ENCODE measurements at regions of chr3 and their contacts with region 1.

Region 1: GRCh38 chr3:125003369-125003853 is 52.4 kb downstream of the HEG1 start:
- DNase-seq: no peak
- H3K4me3 ChIP-seq: no peak overlapping the region
- H3K27ac ChIP-seq: no peak overlapping the region
- H3K4me1 ChIP-seq: no peaks in the 10 kb centered on the region
- H3K27me3 ChIP-seq: no peaks in the 10 kb centered on the region

Region 2: DNA sequence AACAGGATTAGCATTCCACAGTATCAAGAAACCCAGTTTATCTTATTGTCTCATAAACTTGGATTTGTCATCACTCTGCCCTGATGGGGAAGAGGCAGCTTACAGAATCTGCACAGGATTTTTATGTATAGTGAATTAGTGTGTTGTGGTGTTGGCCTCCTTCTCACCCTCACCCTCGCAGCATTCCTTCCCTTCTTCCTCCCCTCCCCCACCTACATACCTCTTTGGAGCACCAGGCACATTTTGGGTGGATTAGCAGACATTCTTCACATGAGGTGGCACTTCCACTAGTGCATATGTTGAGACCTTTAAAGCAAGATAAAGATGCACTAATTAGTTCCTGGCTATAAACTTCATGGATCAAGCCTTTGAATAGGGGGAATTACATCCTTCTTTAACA is 130.2 kb before region 1 on chr3:
- CTCF ChIA-PET with region 1: no interaction called
- POLR2A ChIA-PET with region 1: no interaction called
- DNase-seq: no peak
- H3K4me3 ChIP-seq: no peak overlapping the region
- H3K27ac ChIP-seq: no peak overlapping the region
- H3K4me1 ChIP-seq: peaks cover 7 to 20% (median 11%) of the 10 kb centered on the region in 4 experiments
- H3K27me3 ChIP-seq: no peaks in the 10 kb centered on the region

Region 3: GRCh38 chr3:125129512-125129962 is 126.1 kb after region 1 on chr3:
- CTCF ChIA-PET with region 1: no interaction called
- POLR2A ChIA-PET with region 1: no interaction called
- DNase-seq: no peak
- H3K4me3 ChIP-seq: no peak overlapping the region
- H3K27ac ChIP-seq: no peak overlapping the region
- H3K4me1 ChIP-seq: peaks cover 0 to 68% (median 16%) of the 10 kb centered on the region in 4 experiments
- H3K27me3 ChIP-seq: no peaks in the 10 kb centered on the region

Region 4: DNA sequence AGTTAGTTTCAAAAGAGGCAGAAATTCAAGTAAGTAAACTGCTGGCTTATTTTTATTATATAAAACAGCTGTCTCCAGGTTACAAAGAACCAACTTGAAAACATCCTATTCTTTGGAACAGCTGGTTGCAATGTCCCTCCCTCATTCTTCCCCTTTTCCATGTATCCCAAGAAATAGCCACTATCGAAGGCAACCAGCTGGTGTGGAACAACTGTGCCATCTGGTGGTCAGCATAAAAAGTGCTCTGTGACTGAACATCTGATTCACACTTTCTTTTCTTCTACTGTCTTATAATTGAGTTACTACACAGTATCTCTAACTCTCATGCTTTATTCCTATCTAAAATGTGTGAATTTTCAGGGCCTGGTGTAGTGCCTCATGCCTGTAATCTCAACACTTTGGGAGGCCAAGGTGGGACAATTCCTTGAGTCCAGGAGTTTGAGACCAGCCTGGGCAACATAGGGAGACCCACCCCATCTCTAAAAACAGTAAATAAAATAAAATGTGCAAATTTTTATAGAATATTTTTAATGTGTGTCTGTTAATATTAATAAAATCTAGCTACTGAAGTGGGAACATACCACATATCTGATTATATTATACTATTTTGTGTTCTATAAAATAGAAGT is 582.3 kb after region 1 on chr3:
- CTCF ChIA-PET with region 1: interaction called, 15 read pairs
- POLR2A ChIA-PET with region 1: no interaction called
- DNase-seq: peak; percentile 32 to 54 (median 46)
- H3K4me3 ChIP-seq: no peak overlapping the region
- H3K27ac ChIP-seq: no peak overlapping the region
- H3K4me1 ChIP-seq: peaks cover 0 to 8% (median 3%) of the 10 kb centered on the region in 4 experiments
- H3K27me3 ChIP-seq: no peaks in the 10 kb centered on the region